Dorsolateral prefrontal cortex (tissue), 120 donors: ENCODE measurements at regions of chrX and their contacts with region 1.

Region 1: GRCh38 chrX:115560978-115561604 is at the start of gene PLS3:
- DNase-seq: peak; percentile 20 to 88 (median 82)
- H3K4me3 ChIP-seq: peak within 1 kb of the TSS; percentile 42 to 81 (median 66)
- H3K27ac ChIP-seq: peak within 1 kb of the TSS in 58 of 59 donors; percentile 21 to 90 (median 82)
- H3K27me3 ChIP-seq: peaks cover 0 to 98% (median 54%) of the 10 kb centered on the region in 45 donors
- CTCF ChIP-seq: no peak
- total RNA-seq, gene PLS3: 33.8 to 96.0 (median 55.8) TPM

Region 2: DNA sequence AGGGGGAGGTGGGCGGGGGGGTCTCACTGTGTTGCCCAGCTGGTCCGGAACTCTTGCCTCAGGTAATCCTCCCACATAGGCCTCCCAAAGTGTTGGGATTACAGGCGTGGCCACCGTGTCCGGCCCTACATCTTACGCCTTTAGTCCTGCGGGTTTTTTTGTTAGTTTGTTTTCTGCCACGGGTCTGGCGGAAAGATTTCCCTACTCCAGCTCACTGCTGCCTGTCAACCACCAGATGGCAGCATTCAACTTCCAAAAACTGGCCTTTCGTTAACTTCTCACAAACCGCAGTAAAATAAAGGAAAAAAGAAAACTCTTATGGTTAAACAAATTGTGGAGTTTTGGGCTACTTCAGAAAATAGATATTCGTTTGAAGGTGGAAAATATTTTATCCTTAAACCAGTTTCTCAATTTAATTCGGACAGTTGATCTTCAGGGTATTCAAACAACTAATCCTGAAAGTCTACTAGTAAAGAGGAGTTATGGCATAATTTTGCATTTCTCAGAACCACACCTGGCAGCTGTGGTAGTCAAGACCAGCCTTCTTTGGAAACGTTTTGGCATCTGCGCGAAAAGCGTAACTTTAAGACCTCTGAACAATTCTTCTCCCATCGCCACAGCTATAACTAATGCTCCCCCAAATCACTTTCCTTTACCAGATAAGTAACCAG is 230.5 kb before region 1 on chrX:
- intact Hi-C with region 1: loop called (anchors 5 kb)
- DNase-seq: peak in 6 of 10 donors; percentile 11 to 57 (median 35)
- H3K4me3 ChIP-seq: peak overlapping the region in 39 of 59 donors; percentile 6 to 56 (median 36)
- H3K27ac ChIP-seq: peak overlapping the region in 3 of 59 donors; percentile 23 to 40 (median 32)
- H3K27me3 ChIP-seq: peaks cover 0 to 77% (median 19%) of the 10 kb centered on the region in 45 donors
- CTCF ChIP-seq: peak; percentile 65 to 97 (median 89)

Region 3: GRCh38 chrX:115625572-115626301 is 64.6 kb after region 1 on chrX:
- intact Hi-C with region 1: loop called in 1 of 2 experiments (anchors 5 kb)
- DNase-seq: no peak
- H3K4me3 ChIP-seq: peak overlapping the region in 11 of 59 donors; percentile 1 to 33 (median 11)
- H3K27ac ChIP-seq: peak overlapping the region in 58 of 59 donors; percentile 6 to 92 (median 81)
- H3K27me3 ChIP-seq: peaks cover 0 to 86% (median 20%) of the 10 kb centered on the region in 45 donors
- CTCF ChIP-seq: no peak